Right ventricle myocardium inferior (tissue), 1 donor: ENCODE measurements at regions of chr3 and their contacts with region 1.

Region 1: GRCh38 chr3:121834696-121835464 is at the starts of genes EAF2 and IQCB1:
- DNase-seq: peak; percentile 98
- ATAC-seq: peak; percentile 100
- total RNA-seq, gene EAF2: 3.3 TPM
- total RNA-seq, gene IQCB1: 6.3 TPM

Region 2: GRCh38 chr3:121749276-121750086 is 85.4 kb before region 1 on chr3 and contains the start of gene GOLGB1:
- intact Hi-C with region 1: loop called (anchors 5 kb)
- DNase-seq: peak; percentile 95
- ATAC-seq: peak; percentile 97
- total RNA-seq, gene GOLGB1: 47.5 TPM

Region 3: GRCh38 chr3:122258757-122259371 is 424.0 kb after region 1 on chr3:
- intact Hi-C with region 1: loop called (anchors 10 kb)
- DNase-seq: peak; percentile 87
- ATAC-seq: peak; percentile 92